Stomach (tissue), 19 donors: ENCODE measurements at regions of chr6 and their contacts with region 1.

Region 1: GRCh38 chr6:33235221-33235634 is 26.9 kb downstream of the RING1 start:
- DNase-seq: no peak
- H3K4me3 ChIP-seq: no peak overlapping the region
- H3K27ac ChIP-seq: no peak overlapping the region
- H3K4me1 ChIP-seq: no peaks in the 10 kb centered on the region
- H3K27me3 ChIP-seq: peaks cover 0 to 39% (median 12%) of the 10 kb centered on the region in 3 donors
- CTCF ChIP-seq: no peak
- EP300 ChIP-seq: no peak
- POLR2A ChIP-seq: no peak

Region 2: DNA sequence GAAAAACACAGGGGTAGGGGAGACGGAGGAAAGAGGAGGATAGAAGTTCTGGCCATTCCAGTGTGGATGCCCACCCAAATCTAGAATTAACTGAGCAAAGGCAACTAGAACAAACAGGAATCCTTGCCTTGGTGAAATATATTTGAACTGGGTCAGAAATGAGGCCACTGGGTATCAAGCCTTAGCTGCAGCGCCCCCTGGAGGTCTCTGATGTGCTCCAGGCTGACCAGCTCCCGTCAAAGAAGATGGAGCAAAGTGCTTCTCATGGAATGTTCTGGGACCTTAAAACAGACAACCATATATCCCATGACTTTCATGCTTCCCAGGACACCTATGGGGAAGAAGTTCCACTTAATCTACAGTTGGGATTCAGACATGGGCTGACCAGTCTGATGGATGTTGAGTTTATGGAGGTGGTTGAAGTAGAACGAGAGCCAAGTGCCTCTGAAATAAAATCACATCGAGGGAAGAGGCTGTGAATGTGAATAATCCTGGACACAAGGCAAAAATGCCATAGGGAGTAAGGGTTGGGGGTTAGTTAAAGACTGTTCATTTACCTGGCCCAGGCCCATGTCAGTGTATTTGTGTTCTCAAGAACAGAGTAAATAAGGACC is 109.0 kb before region 1 on chr6:
- intact Hi-C with region 1: loop called (anchors 10 kb)
- DNase-seq: peak; percentile 54 to 76
- H3K4me3 ChIP-seq: no peak overlapping the region
- H3K27ac ChIP-seq: no peak overlapping the region
- H3K4me1 ChIP-seq: no peaks in the 10 kb centered on the region
- H3K27me3 ChIP-seq: no peaks in the 10 kb centered on the region
- CTCF ChIP-seq: peak in 4 of 7 experiments; percentile 16 to 53 (median 42)
- EP300 ChIP-seq: no peak
- POLR2A ChIP-seq: no peak